ENCODE measurements at regions of chr16 and their contacts with region 1.

Region 1: GRCh38 chr16:81035398-81035974 is at the start of gene ATMIN:
- DNase-seq: peak; percentile 85
- H3K4me3 Mint-ChIP-seq: peak within 1 kb of the TSS; percentile 81
- H3K27ac Mint-ChIP-seq: peak within 1 kb of the TSS; percentile 37
- H3K4me1 Mint-ChIP-seq: peaks cover 34% of the 10 kb centered on the region
- H3K27me3 Mint-ChIP-seq: no peaks in the 10 kb centered on the region
- total RNA-seq, gene ATMIN: 16.6 to 18.9 TPM

Region 2: GRCh38 chr16:80924372-80924978 is 111.0 kb before region 1 on chr16:
- CTCF ChIA-PET with region 1: no interaction called
- intact Hi-C with region 1: loop called (anchors 1 kb)
- DNase-seq: peak; percentile 75
- H3K4me3 Mint-ChIP-seq: no peak overlapping the region
- H3K27ac Mint-ChIP-seq: no peak overlapping the region
- H3K4me1 Mint-ChIP-seq: peaks cover 4% of the 10 kb centered on the region
- H3K27me3 Mint-ChIP-seq: peaks cover 22% of the 10 kb centered on the region

Region 3: GRCh38 chr16:80997139-80997798 is 38.2 kb before region 1 on chr16:
- CTCF ChIA-PET with region 1: interaction called, 15 read pairs
- intact Hi-C with region 1: no loop called
- DNase-seq: no peak
- H3K4me3 Mint-ChIP-seq: peak overlapping the region; percentile 75
- H3K27ac Mint-ChIP-seq: peak overlapping the region; percentile 88
- H3K4me1 Mint-ChIP-seq: peaks cover 70% of the 10 kb centered on the region
- H3K27me3 Mint-ChIP-seq: no peaks in the 10 kb centered on the region

Region 4: GRCh38 chr16:81077076-81077940 is 41.8 kb after region 1 on chr16 and contains the start of gene C16orf46:
- CTCF ChIA-PET with region 1: interaction called, 25 read pairs
- intact Hi-C with region 1: loop called (anchors 1 kb)
- DNase-seq: peak; percentile 99
- H3K4me3 Mint-ChIP-seq: no peak within 1 kb of the TSS
- H3K27ac Mint-ChIP-seq: no peak within 1 kb of the TSS
- H3K4me1 Mint-ChIP-seq: peaks cover 4% of the 10 kb centered on the region
- H3K27me3 Mint-ChIP-seq: no peaks in the 10 kb centered on the region
- total RNA-seq, gene C16orf46: 0.74 TPM in 1 of 2 experiments, not detected in the other

Region 5: DNA sequence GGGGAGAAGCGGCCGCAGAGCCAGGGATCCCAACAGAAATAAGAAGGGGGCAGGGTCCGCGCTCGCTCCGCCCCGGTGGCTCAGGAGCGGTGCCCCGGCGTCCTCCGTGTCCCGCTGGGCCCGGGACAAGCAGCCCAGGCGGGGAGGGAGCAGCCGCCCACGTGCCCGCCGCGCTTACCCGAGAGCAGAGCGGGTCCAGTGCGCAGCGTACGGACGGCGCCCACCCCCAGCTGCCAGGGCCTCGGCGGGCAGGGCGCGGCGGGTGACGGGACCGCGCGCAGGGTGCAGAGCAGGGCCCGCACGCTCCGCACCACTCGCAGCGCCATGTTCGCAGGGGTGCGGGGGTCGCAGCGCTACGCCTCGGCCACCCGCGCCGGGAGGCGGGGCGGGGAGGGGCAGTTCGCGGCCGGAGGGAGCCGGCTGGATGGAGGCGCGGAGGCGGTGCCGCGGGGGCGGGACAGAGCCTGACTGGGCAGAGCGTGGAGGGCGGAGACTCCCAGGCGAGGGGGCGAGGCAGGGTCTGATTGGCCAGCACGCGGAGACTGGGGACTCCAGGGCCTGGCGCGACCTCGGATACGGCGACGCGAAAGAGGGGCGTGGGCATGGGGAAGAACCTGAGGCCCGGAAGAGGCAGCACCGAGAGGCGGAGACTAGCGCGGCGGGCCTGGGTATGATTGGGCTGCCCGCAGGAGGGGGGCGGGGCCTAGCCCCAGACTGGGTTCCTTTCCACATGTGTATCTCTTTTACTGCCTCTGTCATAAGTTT is 60.6 kb after region 1 on chr16 and contains the start of gene GCSH:
- CTCF ChIA-PET with region 1: interaction called, 4 read pairs
- intact Hi-C with region 1: loop called (anchors 1 kb)
- DNase-seq: peak; percentile 98
- H3K4me3 Mint-ChIP-seq: peak within 1 kb of the TSS; percentile 78
- H3K27ac Mint-ChIP-seq: peak within 1 kb of the TSS; percentile 51
- H3K4me1 Mint-ChIP-seq: peaks cover 17% of the 10 kb centered on the region
- H3K27me3 Mint-ChIP-seq: no peaks in the 10 kb centered on the region
- total RNA-seq, gene GCSH: 25.7 to 27.4 TPM

Measured in activated naive CD4-positive, alpha-beta T cell treated with anti-CD3 and anti-CD28 coated beads for 36 hours (primary cell).